ENCODE measurements at regions of chr14 and their contacts with region 1.

Region 1: DNA sequence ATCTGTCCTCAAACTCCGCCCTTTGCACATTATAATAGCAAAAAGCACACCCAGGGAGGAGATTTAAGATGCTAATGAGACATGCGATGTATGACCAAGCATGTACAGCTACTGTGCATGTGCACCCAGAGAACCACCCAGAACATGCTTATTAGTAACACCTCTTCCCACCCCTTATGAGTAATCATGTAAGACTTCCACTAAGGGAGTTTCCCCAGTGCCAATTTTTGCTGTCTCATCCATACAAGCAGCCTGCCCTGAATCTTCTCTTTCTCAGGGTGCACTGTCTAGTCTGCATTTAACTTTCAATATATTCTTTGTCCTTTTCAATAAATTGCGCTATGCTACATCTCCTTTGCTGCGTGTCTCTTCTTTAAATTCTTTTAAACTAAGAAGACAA is 830.0 kb upstream of the NOVA1 start:
- DNase-seq: no peak

Region 2: DNA sequence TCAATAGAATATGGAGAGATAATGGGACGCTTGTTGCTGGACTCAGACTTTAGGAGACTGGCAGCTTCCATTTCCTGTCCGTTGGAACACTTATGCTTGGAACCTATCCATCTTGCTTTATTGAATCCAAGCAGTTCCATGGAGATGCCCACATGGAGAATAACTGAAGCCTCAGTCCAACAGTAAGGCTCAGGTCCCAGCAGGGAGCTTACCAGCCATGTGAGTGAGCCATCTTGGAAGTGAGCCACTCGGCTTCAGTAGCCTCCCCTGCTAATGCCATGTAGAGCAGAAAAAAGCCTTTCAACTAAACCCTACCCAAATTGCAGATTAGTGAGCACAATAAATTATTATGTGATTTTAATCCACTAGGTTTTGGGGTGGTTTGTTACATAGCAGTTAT is 1839.0 kb before region 1 on chr14:
- intact Hi-C with region 1: loop called in 1 of 2 experiments (anchors 5 kb)
- DNase-seq: no peak

Region 3: DNA sequence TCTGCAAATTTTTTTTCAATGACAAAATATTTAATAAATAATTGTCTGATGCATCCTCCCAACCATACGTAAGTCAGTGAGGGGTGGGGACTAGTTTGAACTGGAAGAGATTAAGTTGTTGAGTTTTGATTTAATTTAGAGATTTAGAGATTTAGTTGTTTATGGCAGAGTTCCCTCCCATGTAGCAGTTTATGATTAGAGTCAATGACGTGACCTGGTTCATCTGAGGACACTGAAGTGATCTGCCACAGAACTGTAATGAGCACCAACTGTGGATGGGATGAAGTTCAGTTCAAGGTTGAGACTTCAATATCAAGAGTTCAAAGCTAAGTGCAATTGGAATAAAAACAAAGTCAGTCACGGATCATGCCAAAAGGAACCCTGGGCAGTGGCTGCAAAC is 1439.3 kb before region 1 on chr14:
- intact Hi-C with region 1: no loop called
- DNase-seq: no peak

Region 4: DNA sequence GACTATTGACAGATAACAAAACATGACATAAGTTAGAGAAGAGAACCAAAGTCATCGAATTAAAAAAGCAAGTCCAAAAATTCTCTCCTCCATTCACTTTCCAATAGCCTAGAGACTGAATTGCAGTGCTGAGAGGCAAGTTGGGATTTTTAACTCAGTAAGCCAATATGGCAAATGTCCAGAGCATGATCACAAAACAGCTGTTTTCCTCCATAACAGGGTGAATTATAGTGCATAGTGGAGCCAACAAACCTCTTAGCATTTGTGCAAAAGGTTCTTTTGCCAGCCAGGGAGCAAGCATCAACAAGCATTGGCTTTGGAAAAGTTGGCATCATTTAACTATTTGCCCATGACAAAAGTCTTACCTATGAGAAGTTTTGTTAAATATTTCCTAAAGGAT is 371.2 kb before region 1 on chr14:
- intact Hi-C with region 1: no loop called
- DNase-seq: no peak

Region 5: DNA sequence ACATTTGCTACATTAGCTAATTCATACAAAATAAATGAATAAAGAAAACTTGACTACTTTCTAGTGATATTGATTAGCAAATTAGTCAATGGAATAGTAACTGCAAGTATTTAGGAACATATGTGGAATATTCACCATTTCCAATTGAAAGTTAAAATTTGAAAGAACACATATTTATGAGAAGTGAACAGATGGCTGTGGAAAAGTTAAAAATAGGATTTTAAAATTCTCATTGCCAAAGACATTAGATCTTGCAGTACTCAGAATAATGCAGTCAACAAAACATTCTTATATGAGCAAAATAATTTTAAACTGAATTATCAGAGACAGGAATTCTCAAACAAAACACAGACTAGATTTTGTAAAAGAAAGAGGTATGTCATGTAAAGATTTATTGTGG is 216.1 kb before region 1 on chr14:
- intact Hi-C with region 1: no loop called
- DNase-seq: no peak

Region 6: GRCh38 chr14:27338012-27338411 is 89.8 kb before region 1 on chr14:
- intact Hi-C with region 1: no loop called
- DNase-seq: no peak

Measured in posterior vena cava (tissue), 2 donors.